Activated B cell treated with CpG ODN at 0.5 μM for 24 hours (primary cell): ENCODE measurements at regions of chr5 and their contacts with region 1.

Region 1: GRCh38 chr5:97231025-97231636 is 48.1 kb upstream of the RIOK2 start:
- DNase-seq: no peak
- ATAC-seq: peak; percentile 52
- H3K4me3 Mint-ChIP-seq: no peak overlapping the region
- H3K27ac Mint-ChIP-seq: no peak overlapping the region
- H3K4me1 Mint-ChIP-seq: no peaks in the 10 kb centered on the region
- H3K27me3 Mint-ChIP-seq: peaks cover 1% of the 10 kb centered on the region
- CTCF ChIP-seq: peak; percentile 75

Region 2: GRCh38 chr5:97534166-97534565 is 303.0 kb after region 1 on chr5:
- CTCF ChIA-PET with region 1: interaction called, 24 read pairs
- POLR2A ChIA-PET with region 1: no interaction called
- intact Hi-C with region 1: no loop called
- DNase-seq: no peak
- ATAC-seq: no peak
- H3K4me3 Mint-ChIP-seq: no peak overlapping the region
- H3K27ac Mint-ChIP-seq: no peak overlapping the region
- H3K4me1 Mint-ChIP-seq: no peaks in the 10 kb centered on the region
- H3K27me3 Mint-ChIP-seq: no peaks in the 10 kb centered on the region
- CTCF ChIP-seq: no peak

Region 3: GRCh38 chr5:98796197-98796972 is 1565.3 kb after region 1 on chr5:
- CTCF ChIA-PET with region 1: interaction called, 16 read pairs
- POLR2A ChIA-PET with region 1: no interaction called
- intact Hi-C with region 1: loop called (anchors 1 kb)
- DNase-seq: no peak
- ATAC-seq: peak; percentile 75
- H3K4me3 Mint-ChIP-seq: no peak overlapping the region
- H3K27ac Mint-ChIP-seq: no peak overlapping the region
- H3K4me1 Mint-ChIP-seq: peaks cover 8% of the 10 kb centered on the region
- H3K27me3 Mint-ChIP-seq: no peaks in the 10 kb centered on the region
- CTCF ChIP-seq: peak; percentile 26

Region 4: GRCh38 chr5:98827161-98827560 is 1596.0 kb after region 1 on chr5:
- CTCF ChIA-PET with region 1: interaction called, 5 read pairs
- POLR2A ChIA-PET with region 1: no interaction called
- intact Hi-C with region 1: loop called (anchors 1 kb)
- DNase-seq: no peak
- ATAC-seq: no peak
- H3K4me3 Mint-ChIP-seq: no peak overlapping the region
- H3K27ac Mint-ChIP-seq: no peak overlapping the region
- H3K4me1 Mint-ChIP-seq: no peaks in the 10 kb centered on the region
- H3K27me3 Mint-ChIP-seq: no peaks in the 10 kb centered on the region
- CTCF ChIP-seq: no peak